Right cardiac atrium (tissue), 5 donors: ENCODE measurements at regions of chr3 and their contacts with region 1.

Region 1: GRCh38 chr3:160343132-160343531 is 55.9 kb downstream of the IFT80 start:
- DNase-seq: no peak
- ATAC-seq: no peak
- H3K4me3 ChIP-seq: no peak overlapping the region
- H3K27ac ChIP-seq: no peak overlapping the region
- H3K4me1 ChIP-seq: no peaks in the 10 kb centered on the region
- H3K27me3 ChIP-seq: no peaks in the 10 kb centered on the region

Region 2: DNA sequence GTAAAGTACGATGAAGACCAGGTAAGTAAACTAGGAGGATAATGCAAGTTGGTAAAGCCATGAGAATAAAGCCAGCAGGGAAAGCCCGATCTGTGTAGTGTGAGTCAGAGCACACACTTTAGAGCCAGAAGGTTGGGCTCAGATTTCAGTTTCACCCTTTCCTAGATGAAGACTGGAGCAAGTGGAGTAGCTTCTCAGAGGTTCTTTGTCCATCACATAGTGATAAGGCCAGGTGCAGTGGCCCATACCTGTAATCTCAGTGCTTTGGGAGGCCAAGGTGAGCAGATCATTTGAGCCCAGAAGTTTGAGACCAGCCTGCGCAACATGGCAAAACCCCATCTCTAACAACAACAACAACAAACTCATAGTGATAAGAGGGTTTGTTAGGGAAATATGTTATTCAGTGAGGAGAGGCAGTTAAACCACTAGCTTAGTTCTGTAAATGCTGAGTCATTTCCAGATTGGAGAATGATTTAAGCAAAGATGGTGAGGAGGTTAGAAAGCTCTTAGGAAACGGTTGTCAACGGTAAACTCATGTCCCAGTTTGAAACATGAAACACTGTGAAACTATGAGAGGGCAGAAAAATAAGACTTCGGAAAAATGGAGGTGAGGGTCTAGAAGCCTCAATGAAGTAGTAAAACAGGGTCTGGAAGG is 315.5 kb before region 1 on chr3:
- intact Hi-C with region 1: loop called in 3 of 4 experiments (anchors 5 to 10 kb)
- DNase-seq: no peak
- ATAC-seq: no peak
- H3K4me3 ChIP-seq: no peak overlapping the region
- H3K27ac ChIP-seq: no peak overlapping the region
- H3K4me1 ChIP-seq: no peaks in the 10 kb centered on the region
- H3K27me3 ChIP-seq: no peaks in the 10 kb centered on the region

Region 3: DNA sequence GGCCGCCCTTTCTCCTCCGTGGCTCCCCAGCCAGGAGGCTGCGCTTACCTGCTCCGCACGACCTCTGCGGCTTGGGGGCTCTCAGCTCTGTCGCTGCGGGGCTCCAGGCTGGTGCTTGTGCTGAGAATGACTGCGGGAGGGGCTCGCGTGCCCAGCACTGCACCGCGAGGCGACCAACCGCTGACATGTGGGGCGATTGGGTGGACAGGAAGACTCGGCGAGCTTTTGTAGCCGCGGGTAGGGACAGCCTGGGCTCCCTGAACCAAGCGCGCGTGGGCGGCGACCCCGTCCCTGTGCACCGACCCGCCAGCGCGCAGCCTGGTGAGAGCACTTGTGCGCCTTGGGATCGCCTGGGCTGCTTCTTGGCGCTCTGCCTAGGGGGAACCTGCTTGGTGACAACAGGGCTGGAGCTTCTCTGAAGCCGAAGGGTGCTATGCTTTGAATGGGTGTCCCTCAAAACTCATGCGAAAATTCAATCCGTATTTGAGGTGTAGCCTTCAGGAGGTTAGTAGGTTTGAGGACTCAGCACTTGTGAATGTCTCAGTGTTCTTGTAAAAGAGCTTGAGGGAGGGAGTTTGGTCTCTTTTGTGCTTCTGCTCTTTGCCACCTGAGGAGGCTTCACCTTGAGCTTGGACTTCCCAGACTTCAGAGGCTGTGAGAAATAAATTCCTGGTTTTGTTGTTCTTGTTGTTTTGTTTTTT is 304.1 kb before region 1 on chr3:
- intact Hi-C with region 1: loop called in 3 of 4 experiments (anchors 5 to 10 kb)
- DNase-seq: peak; percentile 25 to 63 (median 57)
- ATAC-seq: peak; percentile 29 to 51
- H3K4me3 ChIP-seq: no peak overlapping the region
- H3K27ac ChIP-seq: no peak overlapping the region
- H3K4me1 ChIP-seq: no peaks in the 10 kb centered on the region
- H3K27me3 ChIP-seq: no peaks in the 10 kb centered on the region

Region 4: DNA sequence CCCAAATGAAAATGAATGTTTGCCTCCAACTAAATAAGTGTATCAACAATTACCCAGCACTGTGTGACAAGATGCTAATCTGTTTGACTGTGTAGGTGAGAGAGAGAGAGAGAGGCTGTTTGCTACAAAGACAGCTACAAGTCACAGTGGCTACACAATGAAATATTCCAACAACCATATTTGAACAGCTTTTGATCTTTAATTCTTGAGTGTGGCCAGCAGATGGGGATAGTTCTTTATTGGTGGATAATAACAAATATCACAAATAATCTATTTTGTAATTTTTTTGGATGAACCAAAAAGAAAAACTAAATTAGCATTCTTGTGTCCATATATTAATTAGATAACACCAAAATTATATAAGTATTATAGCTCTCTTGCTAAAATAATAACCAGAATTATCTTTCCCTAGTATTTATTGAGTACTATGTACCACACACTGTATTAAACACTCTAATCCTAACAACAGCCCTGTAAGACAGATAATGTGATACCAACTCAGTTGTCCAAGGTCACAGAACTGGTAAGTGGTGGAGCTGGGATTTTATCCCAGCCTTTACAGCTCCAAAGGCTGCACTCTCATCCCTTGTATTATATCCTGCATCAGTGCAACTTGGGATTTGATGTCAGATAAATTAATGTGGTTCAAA is 179.8 kb before region 1 on chr3:
- intact Hi-C with region 1: loop called in 3 of 4 experiments (anchors 5 kb)
- DNase-seq: no peak
- ATAC-seq: no peak
- H3K4me3 ChIP-seq: no peak overlapping the region
- H3K27ac ChIP-seq: no peak overlapping the region
- H3K4me1 ChIP-seq: no peaks in the 10 kb centered on the region
- H3K27me3 ChIP-seq: no peaks in the 10 kb centered on the region